Endothelial cell of umbilical vein (primary cell): ENCODE measurements at regions of chr12 and their contacts with region 1.

Region 1: DNA sequence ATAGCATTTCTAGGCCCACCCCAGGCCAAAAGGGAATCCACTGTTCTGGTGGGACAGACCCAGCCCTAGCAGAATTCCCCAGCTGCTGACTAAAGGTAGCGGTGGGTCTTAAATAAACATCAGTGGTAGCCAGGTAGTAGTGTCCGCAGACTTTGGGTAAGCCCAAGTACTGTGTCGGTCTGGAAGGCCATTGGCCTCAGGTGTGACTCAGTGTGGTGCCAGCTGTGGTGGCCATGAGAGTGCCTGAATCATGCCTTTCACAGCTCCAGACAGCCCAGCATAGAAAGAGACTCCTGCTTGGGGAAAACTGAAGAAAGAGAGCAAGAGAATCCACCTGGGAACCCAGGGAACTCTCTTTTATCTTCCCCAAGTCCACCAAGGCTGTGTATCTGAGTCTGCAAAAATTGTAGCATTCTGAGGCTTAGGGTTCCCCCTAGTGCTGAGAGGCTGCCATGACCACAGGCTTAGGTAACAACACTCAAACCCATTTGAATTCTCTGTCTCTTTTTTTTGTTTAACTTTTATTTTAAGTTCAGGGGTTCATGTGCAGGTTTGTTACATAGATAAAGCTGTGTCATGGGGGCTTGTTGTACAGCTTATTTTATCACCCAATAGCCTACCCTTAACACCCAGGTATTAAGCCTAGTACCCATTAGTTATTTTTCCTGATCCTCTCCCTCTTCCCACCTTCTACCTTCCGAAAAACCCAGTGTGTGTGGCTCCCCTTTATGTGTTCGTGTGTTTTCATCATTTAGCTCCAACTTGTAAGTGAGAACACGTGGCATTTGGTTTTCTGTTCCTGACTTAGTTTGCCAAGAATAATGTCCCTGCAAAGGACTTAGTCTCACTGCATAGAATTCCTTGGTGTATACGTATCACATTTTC is 16.7 kb upstream of the CD163L1 start:
- DNase-seq: peak; percentile 73
- H3K4me3 ChIP-seq: no peak overlapping the region
- H3K27ac ChIP-seq: no peak overlapping the region
- H3K4me1 ChIP-seq: no peaks in the 10 kb centered on the region
- H3K27me3 ChIP-seq: peaks cover 2 to 4% of the 10 kb centered on the region in 2 experiments
- CTCF ChIP-seq: peak; percentile 83 to 86
- POLR2A ChIP-seq: no peak

Region 2: DNA sequence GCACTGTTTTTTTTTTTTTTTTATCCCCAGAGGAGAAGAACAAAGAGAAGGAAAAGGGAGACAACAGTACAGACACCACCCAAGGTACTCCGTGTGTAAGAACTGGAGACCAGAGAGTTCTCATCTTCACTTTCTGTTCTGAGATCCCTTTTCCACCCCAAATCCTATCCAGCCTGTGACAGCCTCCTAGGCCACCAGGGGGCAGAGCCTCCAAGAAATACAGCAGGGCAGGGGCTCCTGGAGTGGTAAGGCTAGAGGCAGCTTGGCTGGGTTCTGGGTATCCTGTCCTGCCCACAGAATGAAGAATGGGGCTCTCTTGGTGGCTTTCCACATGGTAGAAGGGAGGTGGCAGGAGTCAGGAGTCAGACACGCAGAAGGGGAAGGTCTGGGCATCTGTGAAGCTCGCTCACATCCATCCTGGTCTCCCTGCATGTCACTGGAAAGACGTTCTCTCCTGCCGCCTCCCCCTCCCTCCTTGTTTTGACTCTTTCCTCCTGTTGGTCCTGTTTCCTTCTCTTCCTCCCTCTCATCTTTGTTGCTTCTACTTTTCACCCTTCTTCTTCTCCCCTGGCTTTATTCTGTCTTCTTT is 318.5 kb before region 1 on chr12:
- CTCF ChIA-PET with region 1: no interaction called
- POLR2A ChIA-PET with region 1: no interaction called
- dilution Hi-C with region 1: no loop called
- intact Hi-C with region 1: loop called (anchors 1 kb)
- DNase-seq: peak; percentile 58
- H3K4me3 ChIP-seq: no peak overlapping the region
- H3K27ac ChIP-seq: no peak overlapping the region
- H3K4me1 ChIP-seq: no peaks in the 10 kb centered on the region
- H3K27me3 ChIP-seq: no peaks in the 10 kb centered on the region
- CTCF ChIP-seq: peak; percentile 81 to 86
- POLR2A ChIP-seq: no peak

Region 3: DNA sequence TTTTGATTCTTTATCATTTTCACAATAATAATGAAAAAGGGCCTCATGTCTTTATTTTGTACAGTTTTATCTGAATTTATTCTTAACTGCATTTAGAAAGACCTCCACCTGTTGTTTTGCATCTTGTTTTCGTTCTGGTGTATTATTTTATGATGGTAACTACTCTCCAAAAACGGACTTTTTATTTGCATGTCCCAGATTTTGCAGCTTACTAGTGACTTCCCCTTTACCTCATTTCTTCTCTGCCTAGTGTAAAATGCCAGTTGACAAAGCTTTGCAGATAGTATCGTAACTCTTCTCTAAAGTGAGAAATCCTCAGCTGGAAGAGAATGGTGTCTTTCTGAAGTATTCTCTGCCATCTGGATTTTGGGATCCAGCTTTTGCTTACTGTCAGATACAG is 253.9 kb before region 1 on chr12:
- CTCF ChIA-PET with region 1: no interaction called
- POLR2A ChIA-PET with region 1: no interaction called
- dilution Hi-C with region 1: no loop called
- intact Hi-C with region 1: no loop called
- DNase-seq: no peak
- H3K4me3 ChIP-seq: no peak overlapping the region
- H3K27ac ChIP-seq: no peak overlapping the region
- H3K4me1 ChIP-seq: no peaks in the 10 kb centered on the region
- H3K27me3 ChIP-seq: no peaks in the 10 kb centered on the region
- CTCF ChIP-seq: no peak
- POLR2A ChIP-seq: no peak

Region 4: DNA sequence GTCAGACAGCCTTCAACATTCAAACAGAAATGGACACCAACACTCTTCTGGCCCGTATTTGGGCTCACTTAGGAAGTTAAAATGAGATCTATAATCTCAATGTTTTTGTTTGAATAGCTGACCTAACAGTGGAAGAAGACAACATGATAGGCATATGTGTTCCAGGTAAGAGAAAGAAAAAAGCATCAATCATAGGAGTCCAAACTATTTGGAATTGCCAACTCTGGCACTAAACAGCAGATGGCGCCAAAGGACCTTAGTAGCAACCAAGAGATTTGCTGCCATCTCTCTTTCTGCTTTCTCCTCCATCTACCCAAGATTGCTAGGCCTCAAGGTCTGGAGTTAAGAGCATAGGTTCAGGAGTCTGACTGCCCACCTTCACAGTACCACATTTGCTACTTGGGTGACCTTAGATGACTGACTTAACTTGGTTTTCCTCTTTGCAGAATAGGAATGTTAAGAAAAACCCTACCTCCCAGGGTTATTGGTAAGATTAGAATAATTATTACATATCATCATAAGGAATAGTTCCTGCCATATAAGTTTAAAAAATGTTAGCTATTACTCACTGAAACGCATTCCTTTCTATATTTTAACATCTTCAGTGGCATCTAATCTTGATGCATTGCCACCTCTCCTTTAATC is 240.9 kb before region 1 on chr12:
- CTCF ChIA-PET with region 1: interaction called, 3 read pairs
- POLR2A ChIA-PET with region 1: no interaction called
- dilution Hi-C with region 1: no loop called
- intact Hi-C with region 1: loop called (anchors 1 kb)
- DNase-seq: peak; percentile 71
- H3K4me3 ChIP-seq: no peak overlapping the region
- H3K27ac ChIP-seq: no peak overlapping the region
- H3K4me1 ChIP-seq: no peaks in the 10 kb centered on the region
- H3K27me3 ChIP-seq: peaks cover 0 to 1% of the 10 kb centered on the region in 2 experiments
- CTCF ChIP-seq: peak; percentile 74 to 75
- POLR2A ChIP-seq: no peak

Region 5: GRCh38 chr12:7319930-7320329 is 140.7 kb before region 1 on chr12:
- CTCF ChIA-PET with region 1: interaction called, 35 read pairs
- POLR2A ChIA-PET with region 1: interaction called, 3 read pairs
- dilution Hi-C with region 1: no loop called
- intact Hi-C with region 1: loop called (anchors 1 kb)
- DNase-seq: peak; percentile 46
- H3K4me3 ChIP-seq: no peak overlapping the region
- H3K27ac ChIP-seq: no peak overlapping the region
- H3K4me1 ChIP-seq: no peaks in the 10 kb centered on the region
- H3K27me3 ChIP-seq: no peaks in the 10 kb centered on the region
- CTCF ChIP-seq: peak; percentile 4 to 13
- POLR2A ChIP-seq: no peak

Region 6: DNA sequence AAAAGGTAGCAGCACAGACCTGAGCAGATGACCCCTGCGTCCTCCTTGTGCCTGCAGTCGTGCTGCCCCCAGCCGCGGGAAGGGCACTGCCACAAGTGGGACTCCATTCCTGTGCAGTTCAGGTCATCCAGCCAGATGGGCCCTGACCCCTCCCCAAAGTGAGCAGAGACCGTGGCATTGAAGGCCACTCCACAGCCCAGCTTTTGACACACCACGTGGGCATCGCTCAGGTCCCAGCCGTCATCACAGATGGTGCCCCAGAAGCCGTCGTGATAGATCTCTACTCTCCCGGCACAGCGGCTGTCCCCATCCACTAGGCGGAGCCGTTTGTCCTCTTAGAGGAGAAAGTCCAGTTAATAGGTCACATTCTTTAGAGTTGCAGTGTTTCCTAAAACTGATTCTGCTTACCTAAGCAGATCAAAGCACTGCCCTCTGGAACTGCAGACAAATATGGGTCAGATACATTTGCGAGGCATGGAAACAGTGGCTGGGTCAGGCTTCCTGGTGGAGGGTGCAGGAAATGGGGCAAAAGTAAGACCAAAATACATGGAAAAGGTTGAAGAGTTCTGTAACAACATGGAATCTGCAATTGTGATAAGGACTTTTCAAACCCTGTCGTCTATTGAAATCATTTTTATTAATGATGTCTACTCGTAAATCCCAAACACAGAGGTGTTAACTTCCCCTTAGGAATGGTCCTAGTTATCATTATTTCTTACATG is 86.0 kb before region 1 on chr12:
- CTCF ChIA-PET with region 1: interaction called, 4 read pairs
- POLR2A ChIA-PET with region 1: interaction called, 7 read pairs
- dilution Hi-C with region 1: no loop called
- intact Hi-C with region 1: loop called (anchors 1 kb)
- DNase-seq: peak; percentile 51
- H3K4me3 ChIP-seq: no peak overlapping the region
- H3K27ac ChIP-seq: no peak overlapping the region
- H3K4me1 ChIP-seq: no peaks in the 10 kb centered on the region
- H3K27me3 ChIP-seq: no peaks in the 10 kb centered on the region
- CTCF ChIP-seq: peak; percentile 71 to 73
- POLR2A ChIP-seq: no peak

Region 7: DNA sequence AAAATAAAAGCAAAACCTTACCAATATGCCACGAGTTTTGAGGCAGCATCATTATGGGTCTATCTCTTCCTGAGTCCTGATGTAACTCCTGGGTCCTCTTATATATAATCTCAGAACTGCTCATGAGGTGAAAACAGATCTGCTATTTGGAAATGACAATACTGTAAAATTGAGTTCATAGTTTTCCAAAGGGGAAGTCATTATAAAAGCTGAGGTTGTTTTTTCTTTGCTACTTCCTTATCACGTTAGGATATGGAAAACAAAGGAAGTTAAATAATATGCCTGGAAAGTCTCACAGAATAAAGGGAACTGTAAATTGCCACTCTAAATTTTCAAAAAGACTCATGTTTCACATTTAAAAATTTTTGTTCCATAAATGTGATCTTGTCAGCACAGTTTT is 16.5 kb before region 1 on chr12 and contains the start of gene CD163L1:
- CTCF ChIA-PET with region 1: no interaction called
- POLR2A ChIA-PET with region 1: no interaction called
- dilution Hi-C with region 1: no loop called
- intact Hi-C with region 1: no loop called
- DNase-seq: peak; percentile 56
- H3K4me3 ChIP-seq: no peak within 1 kb of the TSS
- H3K27ac ChIP-seq: no peak within 1 kb of the TSS
- H3K4me1 ChIP-seq: peaks cover 6% of the 10 kb centered on the region
- H3K27me3 ChIP-seq: peaks cover 0 to 3% of the 10 kb centered on the region in 2 experiments
- CTCF ChIP-seq: no peak
- POLR2A ChIP-seq: no peak
- total RNA-seq, gene CD163L1: 7.5 and 10.7 TPM in 2 replicates